ENCODE measurements at regions of chr18 and their contacts with region 1.

Region 1: GRCh38 chr18:25832001-25832604 is 258.3 kb downstream of the SS18 start:
- DNase-seq: no peak
- H3K4me3 ChIP-seq: no peak overlapping the region
- CTCF ChIP-seq: peak; percentile 94

Region 2: DNA sequence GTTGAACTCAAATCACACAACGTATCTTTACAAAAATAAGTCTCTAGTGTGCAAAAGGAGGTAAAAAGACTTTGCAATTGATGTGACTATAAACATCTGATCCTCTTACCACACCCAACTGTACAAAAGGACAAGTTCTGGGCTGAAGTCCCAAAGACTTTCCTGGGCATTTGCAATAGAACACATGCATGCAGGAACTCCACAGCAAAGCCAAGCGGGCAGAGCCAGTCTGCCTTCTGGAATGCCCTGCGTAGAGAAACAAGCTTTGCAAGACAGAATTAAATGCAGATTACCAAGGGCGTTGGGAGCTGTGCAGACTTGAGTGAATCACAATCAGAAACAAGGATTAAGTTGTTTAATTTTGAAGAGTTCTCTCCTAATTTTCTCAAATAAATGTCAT is 271.7 kb before region 1 on chr18:
- CTCF ChIA-PET with region 1: interaction called, 14 read pairs
- POLR2A ChIA-PET with region 1: no interaction called
- DNase-seq: no peak
- H3K4me3 ChIP-seq: no peak overlapping the region
- CTCF ChIP-seq: no peak

Region 3: DNA sequence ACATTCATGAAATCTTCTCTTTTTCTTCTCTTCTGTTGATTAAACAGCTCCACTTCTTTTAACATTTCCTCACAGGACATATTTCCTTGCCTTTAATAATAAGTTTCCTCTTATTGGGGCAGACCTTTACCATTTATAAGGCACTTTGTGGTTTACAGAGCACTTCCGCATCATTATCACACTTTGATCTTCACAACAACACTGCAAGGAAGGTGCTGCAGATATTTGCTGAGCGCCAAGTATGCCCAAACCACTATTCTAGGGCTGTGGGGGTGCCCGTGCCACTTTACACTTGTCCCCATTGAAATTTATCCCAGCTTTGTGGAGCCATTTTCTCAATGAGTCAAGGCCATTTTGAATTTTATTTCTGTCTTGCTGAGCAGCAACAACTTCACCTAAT is 11.7 kb after region 1 on chr18:
- CTCF ChIA-PET with region 1: interaction called, 14 read pairs
- POLR2A ChIA-PET with region 1: no interaction called
- DNase-seq: no peak
- H3K4me3 ChIP-seq: no peak overlapping the region
- CTCF ChIP-seq: no peak

Region 4: DNA sequence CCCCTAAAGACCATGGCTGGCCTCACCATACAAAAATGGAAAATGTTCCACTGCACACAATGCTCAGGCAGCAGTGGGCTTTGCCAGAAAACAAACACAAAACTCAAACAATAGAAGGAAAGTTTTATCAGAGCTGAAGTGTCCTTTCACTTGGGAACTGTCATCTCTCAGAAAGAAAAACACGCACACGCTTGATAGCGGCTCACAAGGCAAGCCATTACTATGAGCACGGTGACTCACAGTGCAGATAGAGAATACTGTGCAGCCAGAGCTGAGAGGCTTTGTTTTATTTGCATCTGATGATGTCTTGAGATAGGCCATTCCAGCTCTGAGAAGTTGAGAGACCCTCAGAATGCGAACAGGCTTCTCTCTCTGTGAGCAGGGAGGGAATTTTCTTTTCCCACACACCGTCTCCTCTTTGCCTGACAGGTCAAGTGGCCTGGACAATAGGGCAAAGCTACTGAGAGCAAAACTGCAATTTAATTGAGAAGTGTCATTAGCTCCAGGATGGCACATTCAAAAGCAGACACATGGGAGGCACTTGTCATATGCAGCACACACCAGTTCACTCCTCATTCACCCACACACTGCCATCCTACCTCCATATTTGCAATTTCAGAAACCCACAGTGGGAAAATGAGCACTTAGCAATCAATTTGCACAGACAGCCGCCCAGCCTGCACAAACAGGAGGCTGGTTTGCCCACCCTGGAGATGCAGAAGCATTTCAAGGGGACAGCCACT is 21.8 kb after region 1 on chr18:
- CTCF ChIA-PET with region 1: interaction called, 14 read pairs
- POLR2A ChIA-PET with region 1: no interaction called
- DNase-seq: no peak
- H3K4me3 ChIP-seq: no peak overlapping the region
- CTCF ChIP-seq: no peak

Region 5: DNA sequence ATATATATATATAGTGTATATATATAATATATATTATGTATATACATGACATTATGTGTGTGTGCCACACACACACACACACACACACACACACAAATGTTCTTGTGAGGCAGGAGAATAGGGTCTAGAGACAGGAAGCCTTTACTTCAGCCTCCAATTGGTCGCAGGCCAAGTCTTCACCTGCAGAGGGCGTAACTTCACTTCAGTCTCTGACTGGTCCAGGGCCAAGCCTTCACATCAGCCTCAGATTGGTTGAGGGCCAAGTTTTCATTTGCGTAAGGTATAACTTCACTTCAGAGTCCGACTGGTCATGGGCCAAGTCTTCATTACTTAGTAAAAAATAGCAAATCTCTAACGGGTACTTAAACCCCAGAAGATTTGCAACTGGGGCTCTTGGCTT is 271.5 kb after region 1 on chr18:
- CTCF ChIA-PET with region 1: no interaction called
- POLR2A ChIA-PET with region 1: no interaction called
- DNase-seq: no peak
- H3K4me3 ChIP-seq: no peak overlapping the region
- CTCF ChIP-seq: no peak